ENCODE measurements at regions of chr17 and their contacts with region 1.

Region 1: GRCh38 chr17:10618202-10618635 is 38.9 kb downstream of the MYH3 start:
- DNase-seq: peak; percentile 38 to 78
- ATAC-seq: peak; percentile 53 to 64
- H3K4me3 ChIP-seq: no peak overlapping the region
- H3K27ac ChIP-seq: peak overlapping the region in 3 of 4 donors; percentile 23 to 84 (median 35)
- H3K4me1 ChIP-seq: peaks cover 11 to 32% of the 10 kb centered on the region in 2 donors
- H3K27me3 ChIP-seq: no peaks in the 10 kb centered on the region
- CTCF ChIP-seq: peak; percentile 63 to 85 (median 82)
- POLR2A ChIP-seq: no peak

Region 2: DNA sequence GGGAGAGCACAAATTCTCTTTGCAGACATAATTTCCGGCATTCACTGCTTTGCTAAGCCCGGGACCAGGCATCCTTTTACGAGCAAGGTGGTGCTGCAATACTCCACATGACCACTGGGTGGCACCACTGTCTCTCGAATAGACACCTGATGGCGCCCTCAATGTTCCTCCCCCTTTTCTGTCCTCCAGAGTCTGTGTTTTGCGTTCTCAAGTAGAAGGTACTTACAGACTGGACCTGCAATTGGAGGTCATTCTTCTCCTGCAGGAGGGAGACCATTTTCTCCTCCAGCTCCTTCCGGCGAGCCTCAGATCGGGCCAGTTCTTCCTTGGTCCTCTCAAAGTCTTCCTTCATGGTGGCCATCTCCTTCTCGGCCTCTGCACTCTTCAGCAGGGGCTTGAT is 290.6 kb before region 1 on chr17:
- in situ Hi-C with region 1: loop called (anchors 5 to 10 kb)
- intact Hi-C with region 1: loop called (anchors 2 kb)
- DNase-seq: peak; percentile 22 to 69
- ATAC-seq: peak; percentile 69 to 70
- H3K4me3 ChIP-seq: no peak overlapping the region
- H3K27ac ChIP-seq: no peak overlapping the region
- H3K4me1 ChIP-seq: no peaks in the 10 kb centered on the region
- H3K27me3 ChIP-seq: no peaks in the 10 kb centered on the region
- CTCF ChIP-seq: peak; percentile 78 to 87 (median 84)
- POLR2A ChIP-seq: no peak

Region 3: GRCh38 chr17:10513299-10514067 is 104.7 kb before region 1 on chr17:
- in situ Hi-C with region 1: loop called in 1 of 4 experiments (anchors 10 kb)
- intact Hi-C with region 1: loop called (anchors 2 kb)
- DNase-seq: peak; percentile 23 to 33
- ATAC-seq: peak; percentile 65 to 79
- H3K4me3 ChIP-seq: peak overlapping the region in 1 of 4 donors; percentile 10
- H3K27ac ChIP-seq: peak overlapping the region in 3 of 4 donors; percentile 73 to 82 (median 78)
- H3K4me1 ChIP-seq: peaks cover 0 to 2% of the 10 kb centered on the region in 2 donors
- H3K27me3 ChIP-seq: no peaks in the 10 kb centered on the region
- CTCF ChIP-seq: peak in 1 of 5 experiments; percentile 9
- POLR2A ChIP-seq: no peak

Region 4: GRCh38 chr17:10549096-10549842 is 69.0 kb before region 1 on chr17 and contains the start of gene MYH2:
- in situ Hi-C with region 1: no loop called
- intact Hi-C with region 1: loop called (anchors 2 kb)
- DNase-seq: no peak
- ATAC-seq: peak; percentile 27 to 46
- H3K4me3 ChIP-seq: no peak within 1 kb of the TSS
- H3K27ac ChIP-seq: peak within 1 kb of the TSS; percentile 66 to 82 (median 80)
- H3K4me1 ChIP-seq: peaks cover 0 to 6% of the 10 kb centered on the region in 2 donors
- H3K27me3 ChIP-seq: no peaks in the 10 kb centered on the region
- CTCF ChIP-seq: no peak
- POLR2A ChIP-seq: no peak
- total RNA-seq, gene MYH2: 77.8 to 4,245 (median 724) TPM

Region 5: GRCh38 chr17:10713318-10713717 is 95.1 kb after region 1 on chr17:
- in situ Hi-C with region 1: no loop called
- intact Hi-C with region 1: no loop called
- DNase-seq: no peak
- ATAC-seq: no peak
- H3K4me3 ChIP-seq: no peak overlapping the region
- H3K27ac ChIP-seq: no peak overlapping the region
- H3K4me1 ChIP-seq: no peaks in the 10 kb centered on the region
- H3K27me3 ChIP-seq: no peaks in the 10 kb centered on the region
- CTCF ChIP-seq: no peak
- POLR2A ChIP-seq: no peak

Region 6: GRCh38 chr17:10789694-10790271 is 171.6 kb after region 1 on chr17:
- in situ Hi-C with region 1: no loop called
- intact Hi-C with region 1: no loop called
- DNase-seq: no peak
- ATAC-seq: no peak
- H3K4me3 ChIP-seq: no peak overlapping the region
- H3K27ac ChIP-seq: no peak overlapping the region
- H3K4me1 ChIP-seq: peaks cover 14 to 19% of the 10 kb centered on the region in 2 donors
- H3K27me3 ChIP-seq: no peaks in the 10 kb centered on the region
- CTCF ChIP-seq: no peak
- POLR2A ChIP-seq: no peak

Region 7: DNA sequence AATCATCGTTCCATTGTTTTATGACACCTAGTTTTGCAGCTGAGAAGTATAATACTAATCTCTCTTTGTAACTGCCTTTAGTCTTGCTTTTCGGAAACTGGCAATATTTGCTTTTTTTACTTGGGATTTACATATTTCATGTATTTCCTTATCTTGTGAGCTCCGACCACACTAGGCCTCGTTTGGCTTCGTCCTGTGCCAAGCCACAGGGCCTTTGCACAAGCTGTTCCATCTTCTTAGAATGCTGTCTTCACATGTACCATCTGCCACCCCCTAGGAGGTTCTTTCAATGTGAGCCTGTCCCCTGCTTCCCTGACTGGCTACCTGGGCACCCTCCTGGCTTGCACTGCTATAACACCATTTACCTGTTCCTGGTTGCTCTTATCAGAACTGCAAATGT is 700.0 kb after region 1 on chr17:
- in situ Hi-C with region 1: no loop called
- intact Hi-C with region 1: no loop called
- DNase-seq: no peak
- ATAC-seq: no peak
- H3K4me3 ChIP-seq: no peak overlapping the region
- H3K27ac ChIP-seq: no peak overlapping the region
- H3K4me1 ChIP-seq: no peaks in the 10 kb centered on the region
- H3K27me3 ChIP-seq: no peaks in the 10 kb centered on the region
- CTCF ChIP-seq: no peak
- POLR2A ChIP-seq: no peak

Measured in gastrocnemius medialis (tissue), 4 donors.